ENCODE measurements at regions of chr15 and their contacts with region 1.

Region 1: GRCh38 chr15:90362936-90363212 is 10.8 kb downstream of the ZNF774 start:
- DNase-seq: no peak
- ATAC-seq: peak in 1 of 2 experiments; percentile 44; a peak in 3 of 6 replicates
- H3K4me3 ChIP-seq: no peak overlapping the region
- H3K27ac ChIP-seq: peak overlapping the region; percentile 31 to 73; a peak in 5 of 6 replicates
- H3K4me1 ChIP-seq: peaks cover 39% of the 10 kb centered on the region
- CTCF ChIP-seq: no peak
- EP300 ChIP-seq: no peak
- POLR2A ChIP-seq: no peak
- RAD21 ChIP-seq: no peak

Region 2: DNA sequence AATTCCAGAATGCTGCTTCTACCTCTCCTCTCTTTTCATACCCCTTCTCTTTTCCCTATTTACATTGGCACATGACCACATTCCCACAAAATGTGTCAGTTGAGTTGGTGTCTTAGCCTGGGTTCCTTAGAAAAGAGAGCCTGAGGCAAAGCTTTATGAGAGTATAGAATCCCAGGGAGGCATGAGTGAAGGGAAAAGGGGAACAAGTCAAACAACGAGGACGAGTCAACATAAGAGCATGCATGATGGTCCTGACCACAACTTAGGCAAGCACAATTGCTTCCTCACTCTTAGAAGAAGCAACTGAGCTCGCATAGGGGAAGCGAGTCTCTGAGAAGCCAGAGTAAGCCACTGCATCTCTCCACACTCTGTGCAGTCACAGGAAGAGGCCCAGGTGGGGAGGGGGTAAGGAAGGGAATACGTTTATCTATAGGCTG is 26.2 kb before region 1 on chr15:
- CTCF ChIA-PET with region 1: interaction called, 34 read pairs
- POLR2A ChIA-PET with region 1: no interaction called
- DNase-seq: peak in 1 of 2 experiments; percentile 69
- ATAC-seq: peak; percentile 60 to 86
- H3K4me3 ChIP-seq: no peak overlapping the region
- H3K27ac ChIP-seq: peak overlapping the region; percentile 39 to 63; a peak in 4 of 6 replicates
- H3K4me1 ChIP-seq: peaks cover 17% of the 10 kb centered on the region
- CTCF ChIP-seq: no peak
- EP300 ChIP-seq: no peak
- POLR2A ChIP-seq: no peak
- RAD21 ChIP-seq: no peak

Region 3: DNA sequence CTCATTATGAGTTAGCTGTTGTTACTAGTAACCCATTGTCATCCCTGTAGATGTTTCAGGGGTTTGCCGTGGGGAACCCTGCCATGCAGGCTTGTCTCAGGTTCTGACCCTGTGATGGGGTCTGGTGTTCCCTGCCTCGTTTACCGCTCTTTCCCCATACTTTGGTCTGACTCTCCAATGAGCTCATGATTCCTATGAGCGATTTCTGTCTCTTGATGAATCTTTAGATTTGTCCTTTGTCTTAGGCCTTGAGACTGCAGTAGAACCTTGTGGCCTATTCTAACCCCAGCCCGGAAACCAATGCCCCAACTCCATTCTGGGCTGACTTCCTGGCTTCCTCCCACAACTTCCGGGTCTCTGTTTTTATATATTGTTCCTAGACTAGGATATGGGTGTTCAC is 13.9 kb after region 1 on chr15:
- CTCF ChIA-PET with region 1: interaction called, 41 read pairs
- POLR2A ChIA-PET with region 1: interaction called, 3 read pairs
- DNase-seq: no peak
- ATAC-seq: no peak
- H3K4me3 ChIP-seq: no peak overlapping the region
- H3K27ac ChIP-seq: no peak overlapping the region
- H3K4me1 ChIP-seq: peaks cover 3% of the 10 kb centered on the region; the same call in 1 of the 3 replicates
- CTCF ChIP-seq: no peak
- EP300 ChIP-seq: no peak
- POLR2A ChIP-seq: no peak
- RAD21 ChIP-seq: no peak

Region 4: DNA sequence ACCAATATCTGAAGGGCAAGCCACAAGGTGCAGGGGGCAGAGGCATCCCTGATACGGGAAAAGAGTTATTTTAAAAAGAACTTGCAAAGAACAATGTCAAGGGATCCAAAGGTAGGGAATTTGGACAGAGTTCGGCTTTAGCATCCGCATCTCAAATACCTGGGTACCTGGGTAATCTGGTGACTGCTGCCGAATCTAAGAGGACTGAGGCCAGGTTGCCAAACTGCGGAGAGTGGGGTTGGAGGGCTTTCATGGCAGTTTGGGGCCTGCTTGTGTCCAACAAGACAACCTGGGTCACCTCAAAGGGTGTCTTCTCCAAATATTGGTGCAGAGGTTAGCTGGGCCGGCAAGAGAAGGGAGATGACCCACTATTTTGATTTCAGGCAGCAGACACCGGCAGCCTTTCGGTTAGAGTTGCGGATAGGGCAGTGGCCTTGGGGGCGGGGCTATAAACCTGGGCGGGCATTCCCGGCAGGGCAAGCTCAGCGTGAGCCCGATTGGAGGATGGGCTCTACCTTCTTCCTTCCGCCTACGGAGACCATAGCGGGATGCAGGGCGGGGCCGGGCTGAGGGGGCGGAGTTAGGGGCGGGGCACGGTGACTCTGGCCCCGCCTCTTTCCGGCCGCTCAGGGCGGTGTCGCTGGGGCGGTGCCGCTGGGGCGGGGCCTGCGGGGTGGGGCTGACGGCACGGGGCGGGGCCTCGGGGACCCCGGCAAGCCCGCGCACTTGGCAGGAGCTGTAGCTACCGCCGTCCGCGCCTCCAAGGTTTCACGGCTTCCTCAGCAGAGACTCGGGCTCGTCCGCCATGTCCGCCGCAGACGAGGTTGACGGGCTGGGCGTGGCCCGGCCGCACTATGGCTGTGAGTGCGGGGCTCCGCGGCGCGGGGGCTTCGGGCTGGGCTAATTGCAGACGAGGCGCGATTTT is 24.9 kb after region 1 on chr15 and contains the start of gene IQGAP1:
- CTCF ChIA-PET with region 1: interaction called, 14 read pairs
- POLR2A ChIA-PET with region 1: interaction called, 16 read pairs
- DNase-seq: peak; percentile 98
- ATAC-seq: peak; percentile 96 to 97
- H3K4me3 ChIP-seq: peak within 1 kb of the TSS; percentile 78
- H3K27ac ChIP-seq: peak within 1 kb of the TSS; percentile 93 to 95
- H3K4me1 ChIP-seq: peaks cover 10% of the 10 kb centered on the region; the same call in 2 of the 3 replicates
- CTCF ChIP-seq: no peak
- EP300 ChIP-seq: no peak
- POLR2A ChIP-seq: peak; percentile 94
- RAD21 ChIP-seq: peak in 1 of 2 experiments; percentile 37; a peak in 2 of 5 replicates
- polyA plus RNA-seq, gene IQGAP1: 168 and 181 TPM in 2 replicates

Region 5: GRCh38 chr15:90436952-90437351 is 74.1 kb after region 1 on chr15:
- CTCF ChIA-PET with region 1: interaction called, 10 read pairs
- POLR2A ChIA-PET with region 1: no interaction called
- DNase-seq: no peak
- ATAC-seq: no peak
- H3K4me3 ChIP-seq: no peak overlapping the region
- H3K27ac ChIP-seq: no peak overlapping the region
- H3K4me1 ChIP-seq: no peaks in the 10 kb centered on the region
- CTCF ChIP-seq: no peak
- EP300 ChIP-seq: no peak
- POLR2A ChIP-seq: no peak
- RAD21 ChIP-seq: no peak